ENCODE measurements at regions of chr3 and their contacts with region 1.

Region 1: DNA sequence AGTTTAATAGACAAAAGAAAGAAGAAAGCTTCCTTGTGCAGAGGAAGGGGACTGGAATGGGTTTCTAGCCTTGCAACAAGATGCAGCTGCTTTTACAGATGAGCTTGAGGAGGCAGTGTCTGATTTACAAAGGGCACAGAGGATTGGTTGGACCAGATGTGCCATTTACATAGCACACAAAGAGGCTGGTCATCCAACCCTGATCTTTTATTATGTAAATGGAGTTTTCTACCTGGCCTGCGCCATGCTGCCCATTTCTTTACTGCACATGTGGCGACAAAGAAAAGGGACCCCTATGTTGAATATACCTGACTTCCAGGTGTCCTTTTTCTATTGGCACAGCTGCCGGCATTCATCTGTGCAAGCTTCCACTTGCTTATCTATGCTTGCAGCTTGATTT is 409.4 kb upstream of the FRG2C start:
- DNase-seq: no peak
- ATAC-seq: no peak
- H3K4me3 ChIP-seq: no peak overlapping the region
- H3K27ac ChIP-seq: no peak overlapping the region
- H3K4me1 ChIP-seq: no peaks in the 10 kb centered on the region
- H3K27me3 ChIP-seq: no peaks in the 10 kb centered on the region
- CTCF ChIP-seq: no peak
- EP300 ChIP-seq: no peak
- POLR2A ChIP-seq: no peak
- RAD21 ChIP-seq: no peak

Region 2: GRCh38 chr3:74862476-74862875 is 392.2 kb before region 1 on chr3:
- CTCF ChIA-PET with region 1: no interaction called
- POLR2A ChIA-PET with region 1: no interaction called
- RAD21 ChIA-PET with region 1: no interaction called
- SMC1A ChIA-PET with region 1: no interaction called
- in situ Hi-C with region 1: no loop called
- intact Hi-C with region 1: no loop called
- DNase-seq: no peak
- ATAC-seq: no peak
- H3K4me3 ChIP-seq: no peak overlapping the region
- H3K27ac ChIP-seq: no peak overlapping the region
- H3K4me1 ChIP-seq: no peaks in the 10 kb centered on the region
- H3K27me3 ChIP-seq: no peaks in the 10 kb centered on the region
- CTCF ChIP-seq: no peak
- EP300 ChIP-seq: no peak
- POLR2A ChIP-seq: no peak
- RAD21 ChIP-seq: no peak

Region 3: GRCh38 chr3:75192146-75192616 is 62.5 kb before region 1 on chr3:
- CTCF ChIA-PET with region 1: interaction called, 6 read pairs
- POLR2A ChIA-PET with region 1: no interaction called
- RAD21 ChIA-PET with region 1: interaction called, 3 read pairs
- SMC1A ChIA-PET with region 1: no interaction called
- in situ Hi-C with region 1: no loop called
- intact Hi-C with region 1: loop called (anchors 5 kb)
- DNase-seq: no peak
- ATAC-seq: peak; percentile 87
- H3K4me3 ChIP-seq: no peak overlapping the region
- H3K27ac ChIP-seq: no peak overlapping the region
- H3K4me1 ChIP-seq: no peaks in the 10 kb centered on the region
- H3K27me3 ChIP-seq: no peaks in the 10 kb centered on the region
- CTCF ChIP-seq: peak; percentile 73 to 85 (median 80)
- EP300 ChIP-seq: no peak
- POLR2A ChIP-seq: no peak
- RAD21 ChIP-seq: peak; percentile 70

Measured in GM12878 (cell line).